H1 (cell line): ENCODE measurements at regions of chr7 and their contacts with region 1.

Region 1: DNA sequence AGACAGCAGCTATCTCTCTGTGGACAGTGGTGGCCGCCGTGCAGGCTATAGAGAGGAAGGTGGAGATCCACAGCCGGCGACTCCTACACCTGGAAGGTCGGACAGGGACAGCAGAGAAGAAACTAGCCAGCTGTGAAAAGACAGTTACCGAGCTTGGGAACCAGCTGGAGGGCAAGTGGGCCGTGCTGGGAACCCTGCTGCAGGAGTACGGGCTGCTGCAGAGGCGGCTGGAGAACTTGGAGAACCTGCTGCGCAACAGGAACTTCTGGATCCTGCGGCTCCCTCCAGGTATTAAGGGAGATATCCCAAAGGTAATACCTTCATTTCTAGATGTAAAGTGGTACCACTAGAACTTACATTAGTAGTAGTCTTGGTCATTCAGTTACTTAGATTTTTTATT is 6.8 kb downstream of the ZNF398 start:
- DNase-seq: no peak
- H3K4me3 ChIP-seq: no peak overlapping the region
- H3K27ac ChIP-seq: no peak overlapping the region
- H3K4me1 ChIP-seq: peaks cover 7 to 16% (median 9%) of the 10 kb centered on the region in 4 experiments; a peak in 6 of 7 replicates
- H3K27me3 ChIP-seq: no peaks in the 10 kb centered on the region
- CTCF ChIP-seq: no peak
- EP300 ChIP-seq: no peak
- POLR2A ChIP-seq: no peak
- RAD21 ChIP-seq: no peak

Region 2: DNA sequence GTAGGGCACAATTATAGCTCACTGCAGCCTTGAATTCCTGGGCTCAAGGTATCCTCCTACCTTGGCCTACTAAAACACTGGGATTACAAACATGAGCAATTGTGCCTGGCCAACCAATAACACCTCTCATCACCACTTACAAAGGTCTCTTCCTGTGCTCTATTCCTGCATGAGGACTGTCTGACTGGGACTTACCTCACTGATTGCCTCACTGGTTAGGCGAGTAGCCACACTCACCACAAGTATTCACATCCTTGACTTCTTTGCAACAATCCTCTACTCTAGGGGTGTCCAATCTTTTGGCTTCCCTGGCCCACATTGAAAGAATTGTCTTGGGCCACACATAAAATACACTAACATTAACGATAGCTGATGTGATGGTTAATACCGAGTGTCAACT is 103.1 kb before region 1 on chr7:
- CTCF ChIA-PET with region 1: no interaction called
- POLR2A ChIA-PET with region 1: no interaction called
- DNase-seq: no peak
- H3K4me3 ChIP-seq: no peak overlapping the region
- H3K27ac ChIP-seq: no peak overlapping the region
- H3K4me1 ChIP-seq: no peaks in the 10 kb centered on the region
- H3K27me3 ChIP-seq: no peaks in the 10 kb centered on the region
- CTCF ChIP-seq: no peak
- EP300 ChIP-seq: no peak
- POLR2A ChIP-seq: no peak
- RAD21 ChIP-seq: no peak

Region 3: DNA sequence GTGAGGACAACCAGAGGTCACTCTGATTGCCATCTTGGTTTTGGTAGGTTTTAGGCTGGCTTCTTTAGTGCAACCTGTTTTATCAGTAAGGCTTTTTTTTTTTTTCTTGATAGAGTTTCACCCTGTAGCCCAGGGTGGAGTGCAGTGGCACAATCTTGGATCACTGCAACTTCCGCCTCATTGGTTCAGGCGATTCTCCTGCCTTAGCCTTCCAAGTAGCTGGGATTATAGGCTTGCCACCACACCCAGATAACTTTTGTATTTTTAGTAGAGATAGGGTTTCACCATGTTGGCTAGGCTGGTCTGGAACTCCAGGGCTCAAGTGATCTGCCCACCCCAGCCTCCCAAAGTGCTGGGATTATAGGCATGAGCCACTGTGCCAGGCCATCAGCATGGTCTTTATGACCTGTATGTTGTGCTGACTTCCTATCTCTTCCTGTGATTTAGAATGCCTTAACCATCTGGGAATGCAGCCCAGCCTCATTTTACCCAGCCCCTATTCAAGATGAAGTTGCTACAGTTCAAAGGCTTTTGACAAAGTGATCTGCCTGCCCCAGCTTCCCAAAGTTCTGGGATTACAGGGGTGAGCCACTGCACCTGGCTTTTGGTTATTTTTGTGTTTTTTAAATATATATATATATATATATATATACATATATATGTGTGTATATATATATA is 20.9 kb before region 1 on chr7:
- CTCF ChIA-PET with region 1: interaction called, 84 read pairs
- POLR2A ChIA-PET with region 1: interaction called, 142 read pairs
- DNase-seq: no peak
- H3K4me3 ChIP-seq: no peak overlapping the region
- H3K27ac ChIP-seq: no peak overlapping the region
- H3K4me1 ChIP-seq: peaks cover 0 to 6% (median 0%) of the 10 kb centered on the region in 4 experiments; a peak in 2 of 7 replicates
- H3K27me3 ChIP-seq: no peaks in the 10 kb centered on the region
- CTCF ChIP-seq: no peak
- EP300 ChIP-seq: no peak
- POLR2A ChIP-seq: no peak
- RAD21 ChIP-seq: no peak